ENCODE measurements at regions of chr2 and their contacts with region 1.

Region 1: DNA sequence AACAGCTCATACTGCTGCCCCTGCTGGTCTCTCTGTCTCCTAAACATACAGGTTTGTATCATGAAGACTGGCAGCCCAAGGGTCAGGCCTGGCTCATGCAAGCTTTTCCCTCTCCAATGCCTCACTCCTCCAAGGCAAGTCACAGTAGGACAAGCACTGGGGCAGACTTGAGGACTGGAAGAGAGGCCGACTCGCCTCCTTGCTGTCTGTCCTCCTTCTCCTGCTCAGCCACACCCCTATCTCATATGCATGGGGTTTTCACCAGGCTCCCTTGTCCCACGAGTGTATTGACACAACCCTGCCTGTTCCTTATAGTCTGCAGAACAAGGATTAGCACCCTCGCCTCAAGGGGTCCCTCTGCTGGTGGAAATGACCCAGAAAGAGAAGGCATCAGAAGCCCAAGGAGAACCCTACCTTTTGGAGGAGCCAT is 223.7 kb downstream of the SOX11 start:
- DNase-seq: peak; percentile 54
- ATAC-seq: peak; percentile 35; the same call in 1 of the 2 replicates
- H3K4me3 ChIP-seq: no peak overlapping the region
- H3K27ac ChIP-seq: peak overlapping the region; percentile 42; the same call in 1 of the 2 replicates
- H3K4me1 ChIP-seq: peaks cover 2% of the 10 kb centered on the region; the same call in 1 of the 2 replicates
- H3K27me3 ChIP-seq: no peaks in the 10 kb centered on the region
- CTCF ChIP-seq: peak; percentile 47
- POLR2A ChIP-seq: no peak
- RAD21 ChIP-seq: peak; percentile 66

Region 2: GRCh38 chr2:3959372-3959771 is 1956.5 kb before region 1 on chr2:
- CTCF ChIA-PET with region 1: no interaction called
- POLR2A ChIA-PET with region 1: no interaction called
- dilution Hi-C with region 1: no loop called
- in situ Hi-C with region 1: loop called (anchors 25 kb)
- intact Hi-C with region 1: no loop called
- DNase-seq: peak; percentile 14
- ATAC-seq: no peak
- H3K4me3 ChIP-seq: no peak overlapping the region
- H3K27ac ChIP-seq: no peak overlapping the region
- H3K4me1 ChIP-seq: no peaks in the 10 kb centered on the region
- H3K27me3 ChIP-seq: no peaks in the 10 kb centered on the region
- CTCF ChIP-seq: peak; percentile 72
- POLR2A ChIP-seq: no peak
- RAD21 ChIP-seq: peak; percentile 69

Region 3: GRCh38 chr2:5691975-5692529 is 223.8 kb before region 1 on chr2 and contains the start of gene SOX11:
- CTCF ChIA-PET with region 1: interaction called, 4 read pairs
- POLR2A ChIA-PET with region 1: no interaction called
- dilution Hi-C with region 1: no loop called
- in situ Hi-C with region 1: no loop called
- intact Hi-C with region 1: loop called (anchors 2 kb)
- DNase-seq: peak; percentile 95
- ATAC-seq: peak; percentile 78
- H3K4me3 ChIP-seq: peak within 1 kb of the TSS; percentile 74
- H3K27ac ChIP-seq: peak within 1 kb of the TSS; percentile 77
- H3K4me1 ChIP-seq: peaks cover 1% of the 10 kb centered on the region; the same call in 1 of the 2 replicates
- H3K27me3 ChIP-seq: no peaks in the 10 kb centered on the region
- CTCF ChIP-seq: no peak
- POLR2A ChIP-seq: peak; percentile 91
- RAD21 ChIP-seq: no peak
- total RNA-seq, gene SOX11: 2.2 and 4.7 TPM in 2 replicates

Region 4: DNA sequence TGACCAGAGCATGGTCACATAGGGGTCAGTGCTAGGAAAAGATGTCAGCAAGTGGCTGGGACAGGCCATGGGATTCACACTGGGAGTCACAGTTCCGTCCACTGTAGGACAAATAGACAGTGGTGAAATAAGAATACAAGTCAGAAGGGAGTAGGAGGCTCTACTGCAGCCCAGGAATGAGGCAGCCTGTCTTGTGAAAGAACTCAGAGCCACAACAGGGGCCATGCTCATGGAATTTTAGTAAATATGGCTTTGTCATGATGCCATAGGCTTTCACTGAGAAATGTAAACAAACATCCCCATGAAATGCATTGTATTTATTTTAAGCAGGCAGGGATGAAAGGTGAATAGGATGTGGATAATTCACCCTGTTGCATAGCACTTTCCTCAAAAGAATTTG is 280.6 kb after region 1 on chr2:
- CTCF ChIA-PET with region 1: no interaction called
- POLR2A ChIA-PET with region 1: no interaction called
- dilution Hi-C with region 1: no loop called
- in situ Hi-C with region 1: no loop called
- intact Hi-C with region 1: no loop called
- DNase-seq: no peak
- ATAC-seq: no peak
- H3K4me3 ChIP-seq: no peak overlapping the region
- H3K27ac ChIP-seq: no peak overlapping the region
- H3K4me1 ChIP-seq: peaks cover 2% of the 10 kb centered on the region; the same call in 1 of the 2 replicates
- H3K27me3 ChIP-seq: no peaks in the 10 kb centered on the region
- CTCF ChIP-seq: no peak
- POLR2A ChIP-seq: no peak
- RAD21 ChIP-seq: no peak

Region 5: DNA sequence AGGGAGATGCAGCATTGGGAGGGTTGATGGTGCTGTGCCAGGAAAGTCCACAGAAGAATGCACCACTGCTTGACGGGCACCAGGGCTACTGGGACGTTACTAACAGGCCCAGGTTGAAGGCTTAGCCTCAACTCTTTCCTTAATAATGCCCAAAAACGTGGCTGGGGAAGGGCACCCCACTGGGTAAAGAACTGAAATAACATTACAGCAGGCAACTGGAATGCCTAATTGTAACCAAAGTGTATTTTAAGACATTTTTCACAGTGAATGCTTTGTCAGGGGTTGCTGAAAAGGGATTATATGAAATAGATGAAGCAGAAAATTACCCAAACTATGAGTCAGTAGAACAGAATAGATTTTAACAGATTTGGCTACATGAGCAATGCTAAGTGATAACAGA is 758.5 kb after region 1 on chr2:
- CTCF ChIA-PET with region 1: no interaction called
- POLR2A ChIA-PET with region 1: no interaction called
- dilution Hi-C with region 1: no loop called
- in situ Hi-C with region 1: no loop called
- intact Hi-C with region 1: no loop called
- DNase-seq: no peak
- ATAC-seq: no peak
- H3K4me3 ChIP-seq: no peak overlapping the region
- H3K27ac ChIP-seq: no peak overlapping the region
- H3K4me1 ChIP-seq: no peaks in the 10 kb centered on the region
- H3K27me3 ChIP-seq: no peaks in the 10 kb centered on the region
- CTCF ChIP-seq: no peak
- POLR2A ChIP-seq: no peak
- RAD21 ChIP-seq: no peak

Region 6: DNA sequence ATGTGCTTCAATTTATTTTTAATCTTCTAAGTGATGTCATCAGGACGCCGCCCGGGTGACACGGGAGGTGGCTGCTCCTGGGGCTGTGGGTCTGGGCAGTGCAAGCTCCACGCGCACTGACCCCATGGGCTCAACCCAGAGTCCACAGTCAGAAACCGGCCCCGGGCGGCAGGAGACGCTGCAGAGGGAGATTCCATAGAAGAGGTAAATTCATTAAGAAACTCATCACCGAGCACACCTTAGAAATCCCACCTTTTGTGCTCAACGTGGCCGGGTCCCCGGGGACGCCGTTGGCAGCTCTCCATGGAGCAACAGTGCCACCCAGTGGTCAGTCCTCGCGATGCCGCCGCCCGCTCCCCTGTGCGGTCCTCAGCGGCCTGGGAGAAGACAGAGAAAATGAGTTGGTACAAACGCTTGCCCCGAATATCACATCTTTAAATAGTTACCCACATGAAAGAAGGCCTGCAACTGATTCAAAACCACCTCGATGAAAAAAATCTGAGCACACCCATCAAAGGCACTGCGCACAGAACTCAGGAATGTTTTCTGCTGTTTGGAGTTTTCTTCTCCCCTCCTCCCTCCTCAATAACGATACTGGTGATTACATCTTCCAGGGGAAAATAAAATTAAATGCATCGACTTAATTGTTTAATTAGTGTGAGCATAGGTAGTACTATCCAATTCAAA is 857.3 kb after region 1 on chr2:
- CTCF ChIA-PET with region 1: no interaction called
- POLR2A ChIA-PET with region 1: no interaction called
- dilution Hi-C with region 1: no loop called
- in situ Hi-C with region 1: no loop called
- intact Hi-C with region 1: loop called (anchors 10 kb)
- DNase-seq: peak; percentile 11
- ATAC-seq: peak; percentile 95
- H3K4me3 ChIP-seq: no peak overlapping the region
- H3K27ac ChIP-seq: no peak overlapping the region
- H3K4me1 ChIP-seq: no peaks in the 10 kb centered on the region
- H3K27me3 ChIP-seq: no peaks in the 10 kb centered on the region; the same call in 1 of the 2 replicates
- CTCF ChIP-seq: peak; percentile 93
- POLR2A ChIP-seq: 0 out of 2 replicates have a peak, but pooled peaks have one; percentile 25
- RAD21 ChIP-seq: peak; percentile 97

Measured in IMR-90 (cell line).